ENCODE measurements at regions of chr9 and their contacts with region 1.

Region 1: DNA sequence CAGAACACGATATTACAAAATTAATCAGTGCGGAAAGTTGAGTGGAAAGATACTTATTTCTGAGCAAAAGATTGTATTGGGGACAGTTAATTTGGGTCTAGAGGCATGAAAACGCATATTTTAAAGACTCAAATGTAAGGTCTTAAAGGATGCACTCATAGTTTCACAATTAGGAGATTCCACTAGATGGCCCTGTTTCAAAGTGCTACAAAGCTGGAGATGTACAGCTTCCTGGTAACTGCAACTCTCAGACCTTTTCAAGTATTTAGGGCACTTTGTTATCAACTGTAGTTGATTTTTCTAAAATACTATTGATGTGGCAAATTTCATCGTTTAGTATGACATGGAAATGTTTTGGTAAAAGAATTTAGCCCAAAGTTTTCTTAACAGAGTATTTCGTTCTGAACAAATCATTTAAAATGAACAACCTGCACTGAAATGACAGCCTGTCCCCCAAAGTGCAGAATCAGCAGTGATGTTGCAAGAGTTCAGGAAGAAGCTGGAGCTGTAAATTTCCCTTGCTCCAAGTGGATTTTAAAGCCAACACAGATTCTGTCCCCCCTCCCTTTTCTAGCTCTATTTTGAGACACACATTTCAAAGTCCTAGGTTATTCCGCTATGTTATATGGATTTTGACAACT is 16.2 kb upstream of the NDUFB6 start:
- DNase-seq: no peak
- ATAC-seq: peak; percentile 63
- H3K4me3 Mint-ChIP-seq: no peak overlapping the region
- H3K27ac Mint-ChIP-seq: no peak overlapping the region
- H3K4me1 Mint-ChIP-seq: no peaks in the 10 kb centered on the region
- H3K27me3 Mint-ChIP-seq: peaks cover 18% of the 10 kb centered on the region

Region 2: DNA sequence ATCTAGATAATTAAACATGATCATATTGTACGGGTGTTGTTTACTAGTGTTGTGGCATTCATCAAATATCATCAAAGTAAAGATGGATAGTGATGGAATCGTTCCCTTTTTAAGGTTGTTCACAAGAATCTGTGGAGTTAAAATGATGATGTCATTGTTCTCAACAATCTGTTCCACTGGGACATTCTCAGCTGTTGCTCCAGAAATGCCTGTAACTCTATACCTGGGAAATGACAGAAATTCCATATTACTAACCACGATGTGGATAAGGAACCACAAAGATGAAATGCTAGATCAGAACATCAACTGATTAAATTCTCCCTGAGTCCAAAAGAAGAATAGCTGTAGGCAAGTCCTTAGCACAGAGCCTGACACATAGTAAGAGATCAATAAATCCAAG is 101.2 kb before region 1 on chr9:
- CTCF ChIA-PET with region 1: no interaction called
- POLR2A ChIA-PET with region 1: no interaction called
- intact Hi-C with region 1: no loop called
- DNase-seq: no peak
- ATAC-seq: no peak
- H3K4me3 Mint-ChIP-seq: no peak overlapping the region
- H3K27ac Mint-ChIP-seq: no peak overlapping the region
- H3K4me1 Mint-ChIP-seq: no peaks in the 10 kb centered on the region
- H3K27me3 Mint-ChIP-seq: no peaks in the 10 kb centered on the region

Region 3: GRCh38 chr9:32968101-32969011 is 379.2 kb after region 1 on chr9:
- CTCF ChIA-PET with region 1: interaction called, 26 read pairs
- POLR2A ChIA-PET with region 1: no interaction called
- intact Hi-C with region 1: loop called (anchors 1 to 2 kb)
- DNase-seq: peak; percentile 74
- ATAC-seq: no peak
- H3K4me3 Mint-ChIP-seq: no peak overlapping the region
- H3K27ac Mint-ChIP-seq: no peak overlapping the region
- H3K4me1 Mint-ChIP-seq: no peaks in the 10 kb centered on the region
- H3K27me3 Mint-ChIP-seq: no peaks in the 10 kb centered on the region